ENCODE measurements at regions of chr13 and their contacts with region 1.

Region 1: DNA sequence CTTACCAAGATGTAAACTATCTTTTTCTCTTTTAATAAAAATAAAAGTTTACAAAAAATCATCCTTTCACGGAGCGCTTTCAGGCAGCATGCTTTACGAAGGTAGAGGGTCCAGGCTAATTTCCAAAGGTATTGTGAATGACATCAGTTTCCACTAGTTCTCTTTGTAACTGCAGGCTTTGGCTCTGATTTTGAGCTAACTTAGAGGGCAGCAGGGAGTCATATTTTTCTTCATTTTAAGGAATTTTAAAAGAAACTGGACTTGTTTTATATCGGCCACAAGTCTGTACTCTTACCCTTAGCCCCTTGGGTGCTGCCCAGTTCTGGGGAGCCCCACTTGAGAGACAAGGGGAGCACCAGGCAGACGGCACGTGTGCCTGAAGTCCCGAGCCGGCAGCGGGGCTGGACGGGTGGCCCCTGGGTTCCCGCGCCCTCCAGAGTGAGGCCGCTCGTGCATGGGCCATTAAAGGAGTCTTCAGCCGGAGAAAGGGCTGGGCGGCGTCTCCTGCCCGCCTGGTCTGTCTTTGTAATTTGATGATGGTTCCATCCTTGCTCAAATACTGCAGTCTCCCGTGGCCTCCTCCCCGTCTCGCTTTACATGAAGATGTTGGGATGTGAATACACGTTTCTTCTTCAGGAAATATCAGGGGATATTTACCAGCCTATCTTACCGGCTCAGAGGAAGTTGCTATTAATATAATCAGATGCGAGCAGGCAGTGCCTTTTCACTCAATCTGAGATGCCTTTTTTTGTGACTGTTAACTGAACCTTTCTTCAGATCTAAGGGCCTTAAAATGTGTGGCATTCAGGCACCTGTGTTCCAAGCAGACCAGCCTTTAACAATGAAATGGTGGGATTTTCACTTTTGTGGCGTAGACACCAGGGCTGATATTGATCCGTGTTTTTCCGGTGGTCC is 67.4 kb downstream of the GGACT start:
- DNase-seq: peak in 4 of 5 donors; percentile 71 to 75 (median 73)
- H3K4me3 ChIP-seq: no peak overlapping the region
- H3K27ac ChIP-seq: no peak overlapping the region
- H3K4me1 ChIP-seq: peaks cover 2 to 20% (median 10%) of the 10 kb centered on the region in 3 donors
- H3K27me3 ChIP-seq: no peaks in the 10 kb centered on the region
- CTCF ChIP-seq: no peak

Region 2: GRCh38 chr13:99656092-99656745 is 865.0 kb before region 1 on chr13:
- intact Hi-C with region 1: loop called (anchors 10 kb)
- DNase-seq: peak in 4 of 5 donors; percentile 81 to 88 (median 86)
- H3K4me3 ChIP-seq: peak overlapping the region in 1 of 3 donors; percentile 59
- H3K27ac ChIP-seq: peak overlapping the region; percentile 13 to 52
- H3K4me1 ChIP-seq: peaks cover 0 to 4% (median 2%) of the 10 kb centered on the region in 3 donors
- H3K27me3 ChIP-seq: no peaks in the 10 kb centered on the region
- CTCF ChIP-seq: peak; percentile 89

Measured in kidney (tissue), 22 donors.